Transverse colon (tissue), 4 donors: ENCODE measurements at regions of chr14 and their contacts with region 1.

Region 1: DNA sequence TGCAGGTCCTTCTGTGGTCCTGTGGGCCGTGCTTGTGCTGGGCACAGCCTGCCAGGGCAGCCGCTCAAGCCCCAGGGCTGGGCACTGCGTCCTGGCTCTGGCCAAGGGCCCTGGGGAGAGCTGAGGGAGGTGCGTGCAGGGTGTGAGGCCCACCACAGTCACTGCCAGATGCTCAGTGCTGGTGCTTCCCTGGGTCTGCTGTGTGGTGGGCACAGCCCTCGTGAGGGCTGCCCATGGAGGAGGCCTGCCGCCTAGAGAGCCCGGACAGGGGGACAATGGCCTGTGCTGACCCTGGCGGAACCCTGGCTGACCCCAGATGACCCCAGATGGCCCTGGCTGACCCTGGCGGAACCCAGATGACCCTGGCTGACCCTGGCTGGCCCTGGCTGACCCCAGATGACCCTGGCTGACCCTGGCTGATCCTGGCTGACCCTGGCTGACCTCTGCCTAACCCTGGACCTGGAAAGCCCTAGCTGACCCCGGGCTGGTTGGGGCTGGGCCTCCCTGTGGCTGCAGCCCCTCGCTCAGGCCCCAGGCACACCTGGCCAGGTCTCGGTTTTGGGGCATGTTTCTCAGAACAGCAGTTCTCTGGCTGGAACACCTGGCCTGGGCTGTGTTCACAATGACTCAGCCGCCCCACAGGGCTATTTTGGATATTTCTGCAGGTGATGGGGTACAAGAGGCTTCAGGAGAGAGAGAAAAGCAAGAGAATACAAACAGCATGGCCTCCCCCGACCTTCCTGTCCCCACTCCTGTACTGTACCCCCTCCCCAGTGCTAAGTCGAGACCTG is 55.4 kb downstream of the TMEM121 start:
- DNase-seq: peak; percentile 68
- H3K4me3 ChIP-seq: no peak overlapping the region
- H3K27ac ChIP-seq: peak overlapping the region in 3 of 4 donors; percentile 12 to 74 (median 50)
- H3K4me1 ChIP-seq: no peaks in the 10 kb centered on the region
- H3K27me3 ChIP-seq: no peaks in the 10 kb centered on the region
- CTCF ChIP-seq: no peak
- EP300 ChIP-seq: no peak
- POLR2A ChIP-seq: no peak

Region 2: DNA sequence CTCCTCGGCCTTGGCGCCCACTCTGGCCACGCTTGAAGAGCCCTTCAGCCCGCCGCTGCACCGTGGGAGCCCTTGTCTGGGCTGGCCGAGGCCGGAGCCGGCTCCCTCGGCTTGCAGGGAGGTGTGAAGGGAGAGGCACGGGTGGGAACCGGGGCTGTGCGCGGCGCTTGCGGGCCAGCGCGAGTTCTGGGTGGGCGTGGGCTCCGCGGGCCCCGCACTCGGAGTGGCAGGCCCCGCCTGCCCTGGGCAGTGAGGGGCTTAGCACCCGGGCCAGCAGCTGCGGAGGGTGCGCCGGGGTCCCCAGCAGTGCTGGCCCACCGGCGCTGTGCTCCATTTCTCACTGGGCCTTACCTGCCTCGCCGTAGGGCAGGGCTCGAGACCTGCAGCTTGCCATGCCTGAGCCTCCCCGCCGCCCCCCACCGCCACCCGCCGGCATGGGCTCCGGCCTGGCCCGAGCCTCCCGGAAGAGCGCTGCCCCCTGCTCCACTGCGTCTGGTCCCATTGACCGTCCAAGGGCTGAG is 34.0 kb before region 1 on chr14:
- in situ Hi-C with region 1: no loop called
- intact Hi-C with region 1: no loop called
- DNase-seq: no peak
- H3K4me3 ChIP-seq: no peak overlapping the region
- H3K27ac ChIP-seq: no peak overlapping the region
- H3K4me1 ChIP-seq: no peaks in the 10 kb centered on the region
- H3K27me3 ChIP-seq: peaks cover 6% of the 10 kb centered on the region
- CTCF ChIP-seq: no peak
- EP300 ChIP-seq: no peak
- POLR2A ChIP-seq: no peak

Region 3: GRCh38 chr14:105640936-105641843 is 59.4 kb after region 1 on chr14:
- in situ Hi-C with region 1: no loop called
- intact Hi-C with region 1: no loop called
- DNase-seq: no peak
- H3K4me3 ChIP-seq: no peak overlapping the region
- H3K27ac ChIP-seq: no peak overlapping the region
- H3K4me1 ChIP-seq: no peaks in the 10 kb centered on the region
- H3K27me3 ChIP-seq: no peaks in the 10 kb centered on the region
- CTCF ChIP-seq: no peak
- EP300 ChIP-seq: no peak
- POLR2A ChIP-seq: no peak

Region 4: GRCh38 chr14:105700622-105701288 is 119.0 kb after region 1 on chr14:
- in situ Hi-C with region 1: loop called in 1 of 4 experiments (anchors 10 kb)
- intact Hi-C with region 1: no loop called
- DNase-seq: peak; percentile 33
- H3K4me3 ChIP-seq: no peak overlapping the region
- H3K27ac ChIP-seq: peak overlapping the region in 2 of 4 donors; percentile 13 to 53
- H3K4me1 ChIP-seq: no peaks in the 10 kb centered on the region
- H3K27me3 ChIP-seq: no peaks in the 10 kb centered on the region
- CTCF ChIP-seq: no peak
- EP300 ChIP-seq: no peak
- POLR2A ChIP-seq: no peak